WTC11 (cell line): ENCODE measurements at regions of chr9 and their contacts with region 1.

Region 1: DNA sequence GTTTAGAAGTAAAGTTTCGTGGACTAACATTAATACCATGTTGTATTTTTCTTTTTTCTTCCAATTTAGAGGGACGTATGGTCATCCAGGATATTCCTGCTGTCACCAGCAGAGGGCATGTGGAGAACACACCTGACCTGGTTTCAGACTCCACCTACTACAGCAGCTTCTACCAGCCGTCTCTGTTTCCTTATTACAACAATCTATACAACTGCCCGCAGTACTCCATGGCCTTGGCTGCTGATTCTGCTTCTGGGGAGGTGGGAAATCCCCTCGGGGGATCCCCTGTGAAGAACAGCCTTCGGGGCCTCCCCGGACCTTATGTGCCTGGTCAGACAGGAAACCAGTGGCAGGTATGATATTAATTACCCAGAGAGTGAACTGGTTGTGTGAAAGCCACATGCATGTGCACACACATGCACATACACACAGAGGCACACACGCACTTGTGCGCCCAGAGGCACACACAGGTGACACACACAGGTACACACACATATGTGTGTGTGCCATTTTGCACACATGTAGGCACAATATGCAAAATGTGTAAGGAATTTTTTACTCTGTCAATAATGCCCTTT is 52.4 kb downstream of the DMRT1 start:
- DNase-seq: peak; percentile 64
- ATAC-seq: peak; percentile 89
- H3K4me3 Mint-ChIP-seq: no peak overlapping the region
- H3K27ac Mint-ChIP-seq: no peak overlapping the region
- H3K4me1 Mint-ChIP-seq: peaks cover 7% of the 10 kb centered on the region
- H3K27me3 Mint-ChIP-seq: peaks cover 8% of the 10 kb centered on the region
- CTCF ChIP-seq: peak; percentile 71

Region 2: GRCh38 chr9:755454-756381 is 138.2 kb before region 1 on chr9:
- CTCF ChIA-PET with region 1: no interaction called
- POLR2A ChIA-PET with region 1: no interaction called
- DNase-seq: no peak
- ATAC-seq: no peak
- H3K4me3 Mint-ChIP-seq: no peak overlapping the region
- H3K27ac Mint-ChIP-seq: no peak overlapping the region
- H3K4me1 Mint-ChIP-seq: peaks cover 19% of the 10 kb centered on the region
- H3K27me3 Mint-ChIP-seq: no peaks in the 10 kb centered on the region
- CTCF ChIP-seq: no peak

Region 3: DNA sequence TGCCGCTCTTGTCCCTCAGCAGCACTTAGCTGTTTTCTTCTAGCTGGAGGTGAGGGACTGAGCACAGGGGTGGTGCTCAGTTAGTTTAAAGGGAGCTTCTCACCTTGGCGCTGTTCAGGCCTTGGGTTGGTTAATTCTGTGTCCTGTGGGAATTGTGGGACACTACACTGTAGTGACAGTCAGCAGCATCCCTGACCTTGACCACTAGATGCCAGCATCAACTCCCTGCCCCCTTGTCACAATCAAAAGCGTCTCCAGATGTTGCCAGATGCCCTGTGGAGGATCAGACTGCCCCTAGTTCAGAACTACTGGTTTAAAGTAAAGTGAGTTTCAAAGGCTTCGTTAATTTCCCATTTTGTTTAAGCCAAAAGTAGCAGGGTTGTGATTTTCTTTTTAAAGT is 17.1 kb after region 1 on chr9:
- CTCF ChIA-PET with region 1: interaction called, 13 read pairs
- POLR2A ChIA-PET with region 1: no interaction called
- DNase-seq: peak; percentile 41
- ATAC-seq: peak; percentile 61
- H3K4me3 Mint-ChIP-seq: no peak overlapping the region
- H3K27ac Mint-ChIP-seq: no peak overlapping the region
- H3K4me1 Mint-ChIP-seq: peaks cover 39% of the 10 kb centered on the region
- H3K27me3 Mint-ChIP-seq: no peaks in the 10 kb centered on the region; the same call in 1 of the 2 replicates
- CTCF ChIP-seq: no peak

Region 4: DNA sequence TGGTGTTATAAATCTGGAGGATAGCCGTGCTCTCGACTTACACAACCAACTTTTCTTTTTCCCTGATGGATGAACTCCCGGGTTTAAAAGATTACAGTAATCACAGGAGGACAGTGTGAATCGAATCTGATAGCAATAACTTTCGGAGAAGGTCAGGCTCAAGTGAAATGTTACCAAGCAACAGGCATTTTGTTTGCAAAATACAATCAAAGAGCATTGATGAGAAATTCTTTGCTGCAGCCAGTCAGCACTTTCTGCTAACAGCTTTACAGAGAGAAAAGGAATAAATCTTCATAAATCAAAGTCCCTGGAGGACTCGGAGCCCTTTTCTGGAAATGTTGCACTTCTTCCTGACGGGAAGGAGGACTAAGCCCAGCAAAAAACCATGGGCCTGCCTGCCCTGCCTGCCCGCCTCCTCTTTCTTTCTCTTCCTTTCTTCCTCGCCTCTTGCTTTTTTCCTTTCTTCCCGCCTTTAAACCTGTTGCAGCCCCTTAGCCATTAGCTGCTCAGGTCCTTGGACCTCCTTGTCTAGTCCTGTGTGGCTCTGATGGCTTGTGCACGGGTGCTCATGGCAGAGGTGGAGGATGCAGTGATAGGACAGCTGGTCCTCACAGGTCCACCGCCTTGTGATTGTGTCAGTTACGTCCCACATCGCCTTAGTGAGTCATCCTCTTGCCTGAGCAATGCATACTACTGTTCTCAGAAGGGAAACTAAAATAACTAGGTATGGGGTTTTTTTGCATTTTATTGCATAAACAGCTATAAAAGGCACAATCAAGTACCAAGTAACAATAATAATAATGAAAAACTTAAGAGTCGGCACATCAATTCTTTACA is 88.7 kb after region 1 on chr9:
- CTCF ChIA-PET with region 1: interaction called, 31 read pairs
- POLR2A ChIA-PET with region 1: no interaction called
- DNase-seq: no peak
- ATAC-seq: no peak
- H3K4me3 Mint-ChIP-seq: no peak overlapping the region
- H3K27ac Mint-ChIP-seq: no peak overlapping the region
- H3K4me1 Mint-ChIP-seq: peaks cover 24% of the 10 kb centered on the region
- H3K27me3 Mint-ChIP-seq: peaks cover 98% of the 10 kb centered on the region
- CTCF ChIP-seq: no peak

Region 5: DNA sequence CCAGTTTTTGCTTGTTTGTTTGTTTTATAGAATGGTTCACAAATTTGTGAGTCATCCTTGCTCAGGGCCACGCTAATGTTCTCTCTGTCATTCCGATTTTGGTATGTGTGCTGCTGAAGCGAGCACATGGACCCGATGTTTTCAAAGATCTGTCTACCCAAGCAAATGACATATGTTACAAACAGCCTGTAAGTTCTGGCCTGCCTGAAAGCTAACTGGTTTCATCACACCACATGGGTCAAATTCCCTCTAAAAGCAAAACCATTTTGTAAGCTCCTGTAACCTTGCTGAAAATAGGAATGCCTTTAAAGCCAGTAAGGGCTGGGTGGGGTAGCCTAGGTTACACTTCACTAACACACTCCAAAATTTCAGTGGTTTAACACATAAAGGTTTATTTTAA is 107.9 kb after region 1 on chr9:
- CTCF ChIA-PET with region 1: interaction called, 37 read pairs
- POLR2A ChIA-PET with region 1: no interaction called
- DNase-seq: no peak
- ATAC-seq: no peak
- H3K4me3 Mint-ChIP-seq: no peak overlapping the region
- H3K27ac Mint-ChIP-seq: no peak overlapping the region
- H3K4me1 Mint-ChIP-seq: peaks cover 3% of the 10 kb centered on the region
- H3K27me3 Mint-ChIP-seq: peaks cover 7% of the 10 kb centered on the region
- CTCF ChIP-seq: no peak